PC-9 (cell line): ENCODE measurements at regions of chr2 and their contacts with region 1.

Region 1: DNA sequence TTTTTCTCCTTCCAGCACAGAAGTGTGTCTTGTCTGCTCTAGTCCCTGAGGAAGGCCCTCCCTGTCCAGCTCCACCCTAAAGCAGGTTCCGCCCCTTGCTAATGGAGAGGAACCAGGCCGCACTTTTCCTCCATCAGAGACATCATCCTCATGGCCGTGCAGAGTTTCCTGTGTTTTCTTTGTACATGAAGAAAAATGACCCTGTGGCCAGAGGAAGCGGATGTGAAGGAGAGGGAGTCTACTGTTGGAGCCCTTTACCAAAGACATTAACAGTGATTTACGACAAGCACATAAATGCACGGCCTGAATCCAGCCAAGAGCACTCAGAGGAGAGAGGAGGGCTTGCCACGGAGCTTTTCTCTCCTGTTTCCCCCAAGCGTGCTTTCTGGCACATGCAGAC is 109.5 kb downstream of the RNF144A start:
- DNase-seq: no peak
- H3K4me3 ChIP-seq: no peak overlapping the region
- H3K27ac ChIP-seq: no peak overlapping the region
- H3K4me1 ChIP-seq: no peaks in the 10 kb centered on the region
- H3K27me3 ChIP-seq: no peaks in the 10 kb centered on the region
- CTCF ChIP-seq: no peak

Region 2: DNA sequence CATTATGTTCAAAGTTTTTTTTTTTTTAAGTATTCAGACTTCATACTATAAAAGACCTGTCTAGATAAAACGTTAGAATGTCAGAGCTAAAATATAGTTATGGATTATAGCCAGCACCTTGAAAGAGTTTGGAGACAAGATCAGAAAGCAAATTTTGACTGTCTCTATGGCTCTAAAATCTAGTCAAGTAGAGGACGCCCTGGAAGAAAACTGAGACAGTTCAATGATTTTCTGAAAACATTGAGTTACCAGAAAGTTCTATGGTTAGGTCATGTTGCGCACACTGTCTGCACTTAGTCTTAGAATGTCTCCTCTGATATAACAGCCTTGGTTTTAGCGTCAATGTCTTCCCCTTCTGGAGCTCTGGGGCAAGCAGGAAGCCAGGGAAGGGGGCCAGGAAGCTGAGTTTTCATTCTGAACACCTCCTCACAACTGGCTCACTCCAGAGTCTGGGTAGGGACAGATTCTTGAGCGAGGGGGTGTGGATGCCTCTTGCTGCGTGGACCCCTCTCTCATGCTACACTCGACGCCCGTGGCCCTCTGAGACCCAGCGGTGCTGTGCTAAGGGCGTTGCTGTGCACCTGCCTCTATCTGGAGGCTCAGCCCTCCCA is 10.0 kb before region 1 on chr2:
- CTCF ChIA-PET with region 1: interaction called, 13 read pairs
- POLR2A ChIA-PET with region 1: no interaction called
- intact Hi-C with region 1: no loop called
- DNase-seq: no peak
- H3K4me3 ChIP-seq: no peak overlapping the region
- H3K27ac ChIP-seq: no peak overlapping the region
- H3K4me1 ChIP-seq: no peaks in the 10 kb centered on the region
- H3K27me3 ChIP-seq: no peaks in the 10 kb centered on the region
- CTCF ChIP-seq: no peak